GM13977 (cell line): ENCODE measurements at regions of chrX and their contacts with region 1.

Region 1: DNA sequence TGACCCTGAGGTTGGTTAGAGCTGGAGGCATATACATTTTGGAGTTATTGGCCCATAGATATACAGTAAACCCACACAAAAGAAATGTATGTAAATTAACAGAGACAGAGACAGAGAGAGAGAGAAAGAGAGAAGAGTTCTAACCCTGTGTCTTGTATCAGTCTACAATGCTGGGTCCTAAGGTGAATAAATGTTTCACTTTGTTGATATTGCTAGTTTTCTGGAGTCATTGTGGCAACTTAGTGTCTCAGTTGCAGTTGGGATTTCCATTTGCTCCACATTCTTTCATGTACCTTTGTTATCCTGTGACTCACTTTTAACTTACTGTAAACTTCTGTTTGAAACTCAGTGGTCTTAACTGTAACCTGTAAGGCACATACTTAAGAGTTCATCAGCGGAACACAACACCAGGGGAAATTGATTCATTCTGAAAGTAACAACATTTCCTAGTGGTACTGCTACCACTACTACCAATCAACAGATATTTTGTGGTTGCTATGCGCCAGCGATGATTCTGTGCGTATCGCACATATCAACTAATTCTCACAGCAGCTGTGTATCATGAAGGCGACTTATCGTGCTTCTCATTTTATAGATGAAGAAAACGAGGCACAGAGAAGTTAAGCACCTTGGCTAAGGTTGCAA is 38.5 kb upstream of the ETDA start:
- DNase-seq: no peak
- CTCF ChIP-seq: no peak

Region 2: DNA sequence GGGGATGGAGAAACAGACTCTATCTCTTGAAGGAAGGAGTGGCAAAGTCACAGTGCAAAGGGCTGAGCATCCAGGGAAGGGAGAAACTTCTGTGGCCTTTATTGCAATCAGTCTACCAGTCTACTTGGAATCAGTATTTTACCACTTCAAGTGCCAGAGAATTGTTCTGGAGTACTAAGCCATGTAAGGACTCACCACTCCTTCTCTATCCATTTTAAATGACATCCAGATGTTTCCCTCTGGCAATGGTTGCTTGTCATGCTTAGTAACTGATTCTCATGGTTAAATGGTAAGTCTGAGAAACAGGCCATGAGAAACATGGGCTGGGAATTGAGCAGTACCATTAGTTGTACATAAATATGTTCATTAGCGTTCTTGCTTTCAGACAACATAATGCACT is 243.6 kb before region 1 on chrX:
- in situ Hi-C with region 1: loop called (anchors 25 kb)
- DNase-seq: no peak
- CTCF ChIP-seq: no peak

Region 3: DNA sequence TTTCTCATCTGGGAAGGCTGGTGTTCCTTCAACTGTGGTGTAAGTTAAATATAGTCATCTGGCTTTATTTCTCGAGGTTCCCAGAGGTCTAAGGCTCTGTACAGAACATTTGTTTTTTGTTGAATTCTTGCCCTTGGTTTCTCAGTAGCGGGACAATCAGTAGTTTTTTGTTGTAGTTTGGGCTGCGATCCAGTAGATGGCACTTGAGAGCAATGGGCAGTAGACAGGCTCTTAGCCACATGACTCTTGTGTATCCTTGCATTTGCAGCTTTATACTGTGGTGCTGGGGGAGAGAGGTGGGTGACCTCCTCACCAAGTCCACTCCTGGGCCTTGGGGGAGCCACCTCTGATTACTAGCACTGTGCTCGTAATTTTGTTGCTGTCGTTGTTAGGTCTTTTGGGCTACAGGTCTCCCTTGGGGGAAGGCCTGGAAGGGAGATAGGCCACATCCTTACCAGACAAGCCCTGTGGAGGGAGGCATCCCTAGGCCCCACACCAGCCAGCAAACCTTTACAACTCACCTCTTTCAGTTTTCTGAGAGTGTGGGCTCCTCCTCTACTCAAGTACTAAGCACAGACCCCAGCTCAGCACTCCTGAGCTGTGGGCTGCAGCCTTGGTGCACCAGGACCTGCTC is 101.1 kb before region 1 on chrX:
- in situ Hi-C with region 1: loop called (anchors 25 kb)
- DNase-seq: no peak
- CTCF ChIP-seq: peak; percentile 77

Region 4: DNA sequence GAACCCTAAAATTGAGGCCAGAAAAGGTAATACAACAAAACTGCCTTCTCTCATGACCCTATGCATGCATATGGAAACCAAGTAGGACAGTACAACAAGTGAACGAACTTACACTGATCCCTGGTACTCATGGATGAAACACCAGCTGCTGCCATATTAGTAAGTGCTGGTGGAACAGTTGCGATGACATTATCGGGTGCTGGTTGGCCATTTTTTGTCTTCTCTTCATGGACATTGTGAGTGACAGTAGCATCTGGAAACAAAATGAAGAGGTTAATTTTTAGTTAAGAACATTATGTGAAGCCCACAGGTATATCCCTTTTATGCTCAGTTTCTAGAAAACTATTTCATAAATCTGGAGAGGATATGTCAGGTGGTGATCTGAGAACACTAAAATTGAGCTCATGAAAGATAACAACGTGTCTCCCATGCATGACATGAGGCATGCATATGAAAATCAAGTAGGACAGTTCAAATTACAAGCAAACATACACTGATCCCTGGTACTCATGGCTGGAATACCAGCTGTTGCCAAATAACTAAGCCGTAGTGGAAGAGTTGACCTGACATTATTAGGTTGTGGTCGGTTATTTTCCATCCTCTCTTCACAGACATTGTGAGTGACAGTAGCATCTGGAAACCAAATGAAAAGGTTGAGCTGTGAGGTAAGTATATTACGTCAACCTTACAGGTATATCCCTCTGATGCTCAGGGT is 425.9 kb after region 1 on chrX:
- in situ Hi-C with region 1: no loop called
- DNase-seq: no peak
- CTCF ChIP-seq: no peak